Psoas muscle (tissue), 8 donors: ENCODE measurements at regions of chr19 and their contacts with region 1.

Region 1: GRCh38 chr19:39435499-39436349 is at the start of gene RPS16:
- DNase-seq: peak; percentile 99 to 100
- ATAC-seq: peak; percentile 97 to 98 (median 98)
- H3K4me3 ChIP-seq: peak within 1 kb of the TSS; percentile 96
- H3K27ac ChIP-seq: peak within 1 kb of the TSS; percentile 93
- H3K4me1 ChIP-seq: peaks cover 18% of the 10 kb centered on the region
- H3K27me3 ChIP-seq: no peaks in the 10 kb centered on the region
- CTCF ChIP-seq: no peak
- total RNA-seq, gene RPS16: 1,186 to 1,958 (median 1,553) TPM

Region 2: GRCh38 chr19:39126591-39127187 is 309.0 kb before region 1 on chr19:
- intact Hi-C with region 1: no loop called
- DNase-seq: no peak
- ATAC-seq: peak in 1 of 4 donors; percentile 24
- H3K4me3 ChIP-seq: peak overlapping the region; percentile 95
- H3K27ac ChIP-seq: peak overlapping the region; percentile 71
- H3K4me1 ChIP-seq: peaks cover 17% of the 10 kb centered on the region
- H3K27me3 ChIP-seq: no peaks in the 10 kb centered on the region
- CTCF ChIP-seq: no peak

Region 3: GRCh38 chr19:39390755-39391592 is 44.8 kb before region 1 on chr19 and contains the starts of genes MED29 and PAF1:
- intact Hi-C with region 1: loop called in 1 of 2 experiments (anchors 2 kb)
- DNase-seq: peak; percentile 96 to 99
- ATAC-seq: peak; percentile 95 to 97 (median 96)
- H3K4me3 ChIP-seq: peak within 1 kb of the TSS; percentile 77
- H3K27ac ChIP-seq: peak within 1 kb of the TSS; percentile 89
- H3K4me1 ChIP-seq: peaks cover 18% of the 10 kb centered on the region
- H3K27me3 ChIP-seq: no peaks in the 10 kb centered on the region
- CTCF ChIP-seq: no peak
- total RNA-seq, gene MED29: 25.0 to 33.6 (median 30.2) TPM
- total RNA-seq, gene PAF1: 33.7 to 38.0 (median 34.6) TPM

Region 4: DNA sequence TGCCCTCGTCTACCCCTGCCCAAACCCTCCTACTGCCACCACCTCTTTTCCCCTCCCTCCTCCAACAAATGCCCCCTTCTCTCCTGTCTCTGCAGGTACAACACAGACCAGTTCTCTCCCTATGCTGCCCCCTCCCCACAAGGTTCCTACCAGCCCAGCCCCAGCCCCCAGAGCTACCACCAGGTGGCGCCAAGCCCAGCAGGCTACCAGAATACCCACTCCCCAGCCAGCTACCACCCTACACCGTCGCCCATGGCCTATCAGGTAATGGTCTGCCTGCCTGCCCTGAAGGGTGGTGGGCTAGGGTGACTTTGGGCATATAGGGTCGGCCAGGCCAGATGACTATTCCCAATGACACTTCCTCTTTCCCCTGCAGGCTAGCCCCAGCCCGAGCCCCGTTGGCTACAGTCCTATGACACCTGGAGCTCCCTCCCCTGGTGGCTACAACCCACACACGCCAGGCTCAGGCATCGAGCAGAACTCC is 38.5 kb after region 1 on chr19:
- intact Hi-C with region 1: no loop called
- DNase-seq: peak; percentile 62 to 82
- ATAC-seq: peak; percentile 61 to 85 (median 72)
- H3K4me3 ChIP-seq: no peak overlapping the region
- H3K27ac ChIP-seq: no peak overlapping the region
- H3K4me1 ChIP-seq: no peaks in the 10 kb centered on the region
- H3K27me3 ChIP-seq: no peaks in the 10 kb centered on the region
- CTCF ChIP-seq: peak; percentile 60